ENCODE measurements at regions of chr11 and their contacts with region 1.

Region 1: GRCh38 chr11:64355078-64355940 is 3.7 kb upstream of the RPS6KA4 start:
- DNase-seq: peak; percentile 93
- H3K4me3 ChIP-seq: no peak overlapping the region
- H3K27ac ChIP-seq: no peak overlapping the region
- H3K4me1 ChIP-seq: peaks cover 29% of the 10 kb centered on the region
- H3K27me3 ChIP-seq: no peaks in the 10 kb centered on the region
- CTCF ChIP-seq: peak; percentile 99

Region 2: DNA sequence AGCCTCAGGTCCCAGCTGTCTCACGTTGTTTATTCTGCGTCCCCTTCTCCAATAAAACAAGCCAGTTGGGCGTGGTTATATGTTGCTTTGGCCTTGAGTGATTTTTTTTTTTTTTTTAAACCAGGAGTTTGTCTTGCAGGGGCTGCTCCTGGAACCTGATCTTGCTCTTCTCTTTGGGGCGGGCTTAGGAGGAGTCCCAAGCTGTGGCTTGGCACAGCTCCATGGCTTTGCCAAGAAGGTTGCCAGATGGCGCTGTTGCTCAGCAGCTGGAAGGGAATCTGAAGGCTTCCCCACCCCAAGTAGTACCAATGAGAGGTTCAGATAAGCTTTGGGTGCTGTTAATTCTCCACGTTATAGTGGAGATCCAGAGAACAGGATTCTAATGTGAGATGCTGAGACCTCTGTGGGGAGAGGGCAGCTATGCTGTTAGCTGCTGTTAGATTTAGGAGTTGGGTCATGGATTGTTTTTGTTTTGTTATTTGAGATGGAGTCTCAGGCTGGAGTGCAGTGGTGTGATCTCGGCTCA is 150.8 kb before region 1 on chr11:
- CTCF ChIA-PET with region 1: interaction called, 13 read pairs
- POLR2A ChIA-PET with region 1: no interaction called
- intact Hi-C with region 1: loop called (anchors 2 kb)
- DNase-seq: peak; percentile 100
- H3K4me3 ChIP-seq: no peak overlapping the region
- H3K27ac ChIP-seq: peak overlapping the region; percentile 93
- H3K4me1 ChIP-seq: peaks cover 59% of the 10 kb centered on the region
- H3K27me3 ChIP-seq: no peaks in the 10 kb centered on the region
- CTCF ChIP-seq: peak; percentile 98

Region 3: DNA sequence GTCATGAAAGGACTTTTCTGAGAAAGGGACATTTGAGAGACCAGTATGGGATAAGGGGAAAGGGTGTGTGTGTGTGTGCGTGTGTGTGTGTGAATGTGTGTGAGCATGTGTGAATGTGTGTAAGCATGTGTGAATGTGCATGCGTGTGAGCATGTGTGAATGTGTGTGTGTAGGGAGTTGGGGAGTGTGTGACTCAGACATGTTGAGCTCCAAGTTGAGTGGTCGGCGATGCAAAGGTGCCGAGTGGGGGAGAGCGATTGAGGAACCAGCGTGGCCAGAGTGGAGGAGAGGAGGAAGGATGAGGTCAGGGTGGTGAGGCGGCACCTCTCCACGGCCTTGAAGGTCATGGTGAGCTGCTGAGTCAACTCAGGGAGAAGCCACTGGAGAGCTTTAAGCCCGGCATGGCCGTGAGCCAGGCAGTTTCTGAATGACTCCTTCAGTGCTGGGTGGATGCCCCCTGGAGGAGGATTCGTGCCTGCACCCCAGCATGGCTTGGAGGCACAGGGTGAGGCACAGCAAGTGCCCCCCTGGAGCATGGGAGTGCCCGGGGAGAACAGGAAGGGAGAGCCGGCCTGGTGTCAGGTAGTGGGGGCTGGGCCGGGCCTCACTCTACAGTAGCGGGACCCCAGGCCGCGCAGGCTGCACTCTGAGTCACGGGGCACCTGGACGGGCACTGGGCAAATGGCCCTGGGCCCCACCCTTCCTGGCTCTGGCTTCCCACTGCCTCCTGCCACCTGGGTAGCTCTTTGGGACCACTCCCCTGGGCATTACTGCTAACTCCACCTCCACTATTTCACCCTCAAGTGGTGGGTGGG is 23.5 kb before region 1 on chr11:
- CTCF ChIA-PET with region 1: interaction called, 11 read pairs
- POLR2A ChIA-PET with region 1: no interaction called
- intact Hi-C with region 1: no loop called
- DNase-seq: peak; percentile 89
- H3K4me3 ChIP-seq: no peak overlapping the region
- H3K27ac ChIP-seq: no peak overlapping the region
- H3K4me1 ChIP-seq: peaks cover 5% of the 10 kb centered on the region
- H3K27me3 ChIP-seq: no peaks in the 10 kb centered on the region
- CTCF ChIP-seq: peak; percentile 83

Region 4: DNA sequence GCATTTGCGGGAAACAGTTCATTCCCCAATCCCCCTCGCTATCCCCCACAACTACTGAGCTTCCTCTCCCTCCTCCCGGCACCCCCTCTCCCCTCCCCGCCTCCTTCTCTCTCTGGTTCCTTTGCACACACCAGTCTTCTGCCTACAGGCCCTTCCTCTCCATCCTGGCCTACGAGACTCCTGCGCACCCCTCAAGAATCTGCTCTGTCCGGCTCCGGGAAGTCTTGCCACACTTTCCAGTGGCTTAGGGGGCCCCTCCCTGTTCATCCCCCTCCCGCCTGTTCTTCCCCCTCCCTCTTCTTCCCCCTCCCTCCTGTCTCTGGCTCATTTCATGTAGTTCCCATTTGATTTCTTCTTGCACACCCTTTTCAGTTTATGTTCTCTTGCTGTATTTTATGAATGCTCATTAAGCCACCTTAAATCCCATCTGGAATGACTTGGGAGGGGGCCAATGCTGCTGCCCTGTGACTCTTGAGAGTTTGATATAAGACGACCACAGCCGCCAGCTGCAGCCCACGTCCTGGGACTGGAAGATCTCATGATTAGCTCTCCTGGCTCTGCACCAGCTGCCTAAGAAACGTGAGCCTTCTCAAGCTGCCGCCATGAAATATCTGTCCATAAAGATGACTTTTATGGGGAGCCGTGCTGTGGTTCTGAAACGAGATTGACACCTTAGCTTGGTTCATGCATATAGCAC is 54.5 kb after region 1 on chr11:
- CTCF ChIA-PET with region 1: interaction called, 4 read pairs
- POLR2A ChIA-PET with region 1: interaction called, 14 read pairs
- intact Hi-C with region 1: no loop called
- DNase-seq: no peak
- H3K4me3 ChIP-seq: no peak overlapping the region
- H3K27ac ChIP-seq: no peak overlapping the region
- H3K4me1 ChIP-seq: no peaks in the 10 kb centered on the region
- H3K27me3 ChIP-seq: no peaks in the 10 kb centered on the region
- CTCF ChIP-seq: no peak

Region 5: GRCh38 chr11:64583296-64584232 is 228.3 kb after region 1 on chr11:
- CTCF ChIA-PET with region 1: interaction called, 10 read pairs
- POLR2A ChIA-PET with region 1: no interaction called
- intact Hi-C with region 1: no loop called
- DNase-seq: no peak
- H3K4me3 ChIP-seq: no peak overlapping the region
- H3K27ac ChIP-seq: no peak overlapping the region
- H3K4me1 ChIP-seq: no peaks in the 10 kb centered on the region
- H3K27me3 ChIP-seq: no peaks in the 10 kb centered on the region
- CTCF ChIP-seq: no peak

Measured in A673 (cell line).